ENCODE measurements at regions of chr1 and their contacts with region 1.

Region 1: GRCh38 chr1:232904566-232904965 is 45.8 kb upstream of the NTPCR start:
- DNase-seq: peak; percentile 54
- H3K4me3 Mint-ChIP-seq: no peak overlapping the region
- H3K27ac Mint-ChIP-seq: no peak overlapping the region
- H3K4me1 Mint-ChIP-seq: no peaks in the 10 kb centered on the region
- H3K27me3 Mint-ChIP-seq: no peaks in the 10 kb centered on the region
- CTCF ChIP-seq: no peak

Region 2: GRCh38 chr1:232891071-232891470 is 13.5 kb before region 1 on chr1:
- CTCF ChIA-PET with region 1: interaction called, 3 read pairs
- POLR2A ChIA-PET with region 1: interaction called, 19 read pairs
- intact Hi-C with region 1: no loop called
- DNase-seq: peak; percentile 75
- H3K4me3 Mint-ChIP-seq: no peak overlapping the region
- H3K27ac Mint-ChIP-seq: peak overlapping the region; percentile 68
- H3K4me1 Mint-ChIP-seq: peaks cover 21% of the 10 kb centered on the region
- H3K27me3 Mint-ChIP-seq: no peaks in the 10 kb centered on the region
- CTCF ChIP-seq: no peak

Measured in MCF 10A (cell line).